ENCODE measurements at regions of chr5 and their contacts with region 1.

Region 1: GRCh38 chr5:132915681-132916080 is 42.2 kb downstream of the LEAP2 start:
- DNase-seq: no peak
- ATAC-seq: no peak
- H3K4me3 ChIP-seq: no peak overlapping the region
- H3K4me3 Mint-ChIP-seq: no peak overlapping the region
- H3K27ac ChIP-seq: no peak overlapping the region
- H3K27ac Mint-ChIP-seq: no peak overlapping the region
- H3K4me1 ChIP-seq: no peaks in the 10 kb centered on the region
- H3K4me1 Mint-ChIP-seq: peaks cover 3% of the 10 kb centered on the region
- H3K27me3 ChIP-seq: no peaks in the 10 kb centered on the region
- H3K27me3 Mint-ChIP-seq: no peaks in the 10 kb centered on the region
- CTCF ChIP-seq: no peak

Region 2: GRCh38 chr5:132926437-132926836 is 10.8 kb after region 1 on chr5:
- CTCF ChIA-PET with region 1: no interaction called
- POLR2A ChIA-PET with region 1: interaction called, 11 read pairs
- intact Hi-C with region 1: no loop called
- DNase-seq: no peak
- ATAC-seq: no peak
- H3K4me3 ChIP-seq: no peak overlapping the region
- H3K4me3 Mint-ChIP-seq: no peak overlapping the region
- H3K27ac ChIP-seq: no peak overlapping the region
- H3K27ac Mint-ChIP-seq: no peak overlapping the region
- H3K4me1 ChIP-seq: no peaks in the 10 kb centered on the region
- H3K4me1 Mint-ChIP-seq: peaks cover 1% of the 10 kb centered on the region
- H3K27me3 ChIP-seq: no peaks in the 10 kb centered on the region
- H3K27me3 Mint-ChIP-seq: no peaks in the 10 kb centered on the region
- CTCF ChIP-seq: no peak